GM10248 (cell line): ENCODE measurements at regions of chr3 and their contacts with region 1.

Region 1: GRCh38 chr3:196016485-196016884 is 65.4 kb downstream of the TFRC start:
- DNase-seq: no peak
- CTCF ChIP-seq: no peak

Region 2: DNA sequence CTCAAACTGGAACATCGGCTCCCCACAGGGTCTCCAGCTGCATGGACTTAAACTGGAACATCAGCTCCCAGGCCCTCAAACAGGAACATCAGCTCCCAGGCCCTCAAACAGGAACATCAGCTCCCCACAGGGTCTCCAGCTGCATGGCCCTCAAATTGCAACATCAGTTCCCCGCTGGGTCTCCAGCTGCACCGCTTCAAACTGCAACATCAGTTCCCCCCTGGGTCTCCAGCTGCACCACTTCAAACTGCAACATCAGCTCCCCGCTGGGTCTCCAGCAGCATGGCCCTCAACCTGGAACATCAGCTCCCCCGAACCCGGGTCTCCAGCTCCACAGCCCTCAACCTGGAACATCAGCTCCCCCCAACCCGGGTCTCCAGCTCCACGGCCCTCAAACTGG is 16.6 kb before region 1 on chr3:
- CTCF ChIA-PET with region 1: interaction called, 15 read pairs
- POLR2A ChIA-PET with region 1: no interaction called
- DNase-seq: no peak
- CTCF ChIP-seq: no peak

Region 3: GRCh38 chr3:196039358-196039757 is 22.9 kb after region 1 on chr3:
- CTCF ChIA-PET with region 1: interaction called, 18 read pairs
- POLR2A ChIA-PET with region 1: no interaction called
- DNase-seq: no peak
- CTCF ChIP-seq: no peak